ENCODE measurements at regions of chr14 and their contacts with region 1.

Region 1: DNA sequence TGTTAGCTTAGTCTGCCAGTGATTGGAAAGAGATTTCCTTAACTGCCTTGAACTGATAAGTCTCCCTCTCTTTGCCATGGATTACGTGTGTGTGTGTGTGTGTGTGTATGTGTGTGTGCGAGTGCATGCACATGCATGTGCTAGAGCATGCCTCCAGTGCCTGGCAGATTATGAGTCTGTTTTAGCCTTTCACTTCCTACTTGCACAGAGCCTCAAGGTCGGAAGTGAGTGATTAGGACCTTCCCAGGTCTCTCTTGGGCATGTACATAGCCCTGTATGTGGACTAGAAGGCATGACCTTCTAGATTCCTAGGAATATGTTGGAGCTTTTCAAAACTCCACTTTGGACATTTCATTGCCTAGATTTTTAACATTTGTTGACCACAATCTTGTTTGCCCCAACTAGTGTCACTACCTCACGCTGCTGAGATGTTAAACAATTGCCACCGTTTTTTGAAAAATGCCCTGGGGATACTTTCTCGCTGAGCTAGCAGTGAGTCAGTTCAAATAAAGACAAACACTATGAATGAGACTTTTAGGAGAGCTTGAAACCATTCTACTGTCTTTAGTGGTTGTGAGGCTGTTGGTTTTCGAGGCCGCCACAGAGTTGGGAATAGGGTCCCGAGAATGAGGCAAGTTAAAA is 28.2 kb downstream of the KIAA0586 start:
- DNase-seq: no peak
- H3K4me3 ChIP-seq: no peak overlapping the region
- H3K27ac ChIP-seq: no peak overlapping the region
- H3K4me1 ChIP-seq: no peaks in the 10 kb centered on the region
- H3K27me3 ChIP-seq: no peaks in the 10 kb centered on the region
- CTCF ChIP-seq: no peak
- POLR2A ChIP-seq: no peak

Region 2: DNA sequence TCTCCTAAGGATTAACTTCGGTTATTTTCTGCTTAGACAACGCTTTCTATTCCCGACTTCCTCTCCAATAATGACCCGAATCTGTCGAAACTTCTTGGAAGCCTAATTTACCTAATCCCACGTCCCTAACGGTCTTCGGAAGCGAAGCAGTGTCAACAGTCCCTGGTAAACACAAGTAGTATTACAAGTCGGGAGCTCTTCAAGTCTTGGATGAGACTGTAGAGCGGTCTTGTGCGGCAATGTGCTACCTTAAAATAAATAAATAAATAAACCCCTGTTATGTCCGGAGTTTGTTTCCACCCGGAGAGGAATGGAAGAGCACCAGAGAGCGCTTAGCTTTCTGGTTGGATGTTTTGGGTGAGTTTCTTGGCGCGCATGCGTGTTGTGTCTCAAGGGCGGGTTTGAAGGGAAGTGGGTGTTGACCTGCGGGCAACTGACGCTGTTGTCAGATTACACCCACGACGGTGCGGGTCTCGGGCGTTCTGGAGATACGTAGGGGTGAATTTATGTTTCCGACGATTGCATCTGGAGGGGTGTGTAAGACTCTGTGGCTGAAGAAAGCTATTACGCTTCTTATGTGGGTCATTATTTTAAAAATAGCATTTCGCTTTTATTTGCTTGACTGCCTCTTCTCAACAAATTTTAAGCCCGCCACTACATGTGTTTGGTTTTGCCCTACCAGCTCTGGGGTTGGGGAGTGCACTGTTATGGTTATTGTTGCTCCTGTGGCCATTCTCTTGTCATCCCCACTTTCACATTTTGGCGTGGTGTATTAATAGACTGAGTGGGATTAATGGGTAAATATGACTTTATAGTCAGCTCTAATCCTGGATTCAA is 28.2 kb before region 1 on chr14 and contains the starts of genes KIAA0586 and TIMM9:
- intact Hi-C with region 1: loop called (anchors 1 kb)
- DNase-seq: peak in 1 of 2 donors; percentile 96
- H3K4me3 ChIP-seq: peak within 1 kb of the TSS; percentile 80 to 91
- H3K27ac ChIP-seq: peak within 1 kb of the TSS; percentile 87
- H3K4me1 ChIP-seq: peaks cover 29% of the 10 kb centered on the region
- H3K27me3 ChIP-seq: no peaks in the 10 kb centered on the region
- CTCF ChIP-seq: no peak
- POLR2A ChIP-seq: peak in 1 of 2 donors; percentile 73
- total RNA-seq, gene KIAA0586: 13.3 TPM
- total RNA-seq, gene TIMM9: 47.6 TPM

Region 3: DNA sequence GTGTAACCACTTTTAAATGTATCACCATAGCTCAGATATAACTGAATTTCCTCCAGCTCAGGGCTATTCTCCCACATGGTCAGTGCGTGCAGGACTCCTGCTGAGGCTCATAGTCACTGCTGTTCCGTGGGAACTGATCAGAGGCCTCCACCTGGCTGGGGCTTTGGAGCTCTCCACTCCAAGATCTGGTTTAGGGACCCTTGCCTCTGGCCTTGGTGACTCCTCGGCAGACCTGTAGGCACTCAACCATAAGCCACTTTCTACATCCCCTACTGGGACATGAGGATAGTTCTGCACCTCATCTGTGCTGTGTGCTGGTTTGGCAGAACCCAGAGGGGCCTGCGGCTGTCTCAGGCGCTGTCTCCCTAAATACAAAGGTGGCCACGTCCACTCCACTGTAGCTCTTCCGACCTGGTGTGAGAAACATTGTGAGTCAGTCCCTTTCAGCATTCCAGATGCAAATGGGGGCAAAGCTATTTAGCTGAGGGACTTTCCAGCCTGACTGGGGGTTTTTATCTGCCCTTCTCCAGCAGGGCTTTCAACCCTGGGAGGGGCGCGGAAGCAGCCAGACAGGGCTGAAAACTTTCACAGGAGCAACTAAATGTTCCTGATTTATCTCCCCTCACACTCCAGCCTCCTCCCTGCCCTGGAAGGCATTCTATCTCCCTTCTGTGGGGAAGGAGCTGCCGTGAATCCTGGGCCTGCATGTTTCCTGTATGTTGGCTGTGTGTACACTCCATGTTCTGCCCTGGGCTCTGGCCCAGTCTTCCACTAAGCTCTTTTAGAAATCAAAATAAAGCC is 514.4 kb after region 1 on chr14:
- intact Hi-C with region 1: loop called (anchors 5 kb)
- DNase-seq: no peak
- H3K4me3 ChIP-seq: no peak overlapping the region
- H3K27ac ChIP-seq: no peak overlapping the region
- H3K4me1 ChIP-seq: no peaks in the 10 kb centered on the region
- H3K27me3 ChIP-seq: no peaks in the 10 kb centered on the region
- CTCF ChIP-seq: no peak
- POLR2A ChIP-seq: no peak

Measured in vagina (tissue), 2 donors.